Heart right ventricle (tissue), 16 donors: ENCODE measurements at regions of chr1 and their contacts with region 1.

Region 1: GRCh38 chr1:147794570-147794969 is 34.2 kb upstream of the GJA5 start:
- DNase-seq: peak; percentile 28 to 30
- ATAC-seq: peak; percentile 57 to 89 (median 84)
- H3K4me3 ChIP-seq: no peak overlapping the region
- H3K27ac ChIP-seq: peak overlapping the region in 2 of 10 donors; percentile 24 to 28
- H3K4me1 ChIP-seq: peaks cover 0 to 10% (median 8%) of the 10 kb centered on the region in 9 donors
- H3K27me3 ChIP-seq: no peaks in the 10 kb centered on the region
- CTCF ChIP-seq: no peak

Region 2: GRCh38 chr1:147599362-147600118 is 195.0 kb before region 1 on chr1:
- intact Hi-C with region 1: no loop called
- DNase-seq: peak; percentile 97 to 99
- ATAC-seq: peak; percentile 93 to 98 (median 95)
- H3K4me3 ChIP-seq: peak overlapping the region; percentile 60 to 94 (median 85)
- H3K27ac ChIP-seq: peak overlapping the region; percentile 79 to 96 (median 90)
- H3K4me1 ChIP-seq: peaks cover 5 to 42% (median 17%) of the 10 kb centered on the region in 9 donors
- H3K27me3 ChIP-seq: peaks cover 0 to 18% (median 0%) of the 10 kb centered on the region in 7 donors
- CTCF ChIP-seq: no peak

Region 3: DNA sequence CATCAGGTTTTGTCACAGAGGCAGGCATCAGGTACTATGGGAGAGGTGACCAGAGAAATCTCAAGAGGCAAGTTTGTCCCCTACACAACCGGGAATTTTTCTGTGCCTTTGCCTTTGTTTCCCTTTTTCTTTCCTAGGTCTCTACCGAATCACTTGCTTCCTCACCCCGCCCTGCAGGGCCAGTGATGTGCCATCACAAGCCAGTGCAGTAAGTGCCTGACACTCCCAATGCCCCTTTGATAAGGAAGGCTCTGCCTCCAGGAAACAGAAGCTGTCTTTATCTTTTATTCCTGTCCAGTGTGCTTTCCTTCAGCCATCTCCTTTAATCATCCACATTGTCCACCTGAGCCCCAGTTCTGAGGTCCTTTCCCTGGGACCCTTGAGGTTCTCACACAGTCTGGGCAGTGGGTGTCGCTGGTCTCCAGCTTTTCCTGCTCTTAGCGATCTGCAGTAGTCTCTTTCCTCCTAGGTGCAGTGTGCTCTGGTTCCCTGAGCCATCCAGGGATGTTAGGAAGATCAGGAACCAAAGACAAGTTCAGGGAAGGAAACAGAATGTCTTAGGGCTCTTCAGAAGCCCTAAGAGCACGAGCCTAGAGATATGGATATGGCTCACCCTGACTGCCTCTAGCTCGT is 70.8 kb before region 1 on chr1:
- intact Hi-C with region 1: loop called in 1 of 10 experiments (anchors 10 kb)
- DNase-seq: peak; percentile 47 to 48
- ATAC-seq: peak; percentile 89 to 96 (median 94)
- H3K4me3 ChIP-seq: no peak overlapping the region
- H3K27ac ChIP-seq: no peak overlapping the region
- H3K4me1 ChIP-seq: peaks cover 0 to 5% (median 0%) of the 10 kb centered on the region in 9 donors
- H3K27me3 ChIP-seq: no peaks in the 10 kb centered on the region
- CTCF ChIP-seq: peak; percentile 48 to 85 (median 68)

Region 4: GRCh38 chr1:147735423-147735822 is 59.1 kb before region 1 on chr1:
- intact Hi-C with region 1: loop called in 1 of 10 experiments (anchors 2 kb)
- DNase-seq: no peak
- ATAC-seq: peak in 7 of 8 donors; percentile 45 to 75 (median 63)
- H3K4me3 ChIP-seq: no peak overlapping the region
- H3K27ac ChIP-seq: peak overlapping the region in 3 of 10 donors; percentile 6 to 60 (median 15)
- H3K4me1 ChIP-seq: peaks cover 0 to 35% (median 13%) of the 10 kb centered on the region in 9 donors
- H3K27me3 ChIP-seq: no peaks in the 10 kb centered on the region
- CTCF ChIP-seq: no peak